GM12878 (cell line): ENCODE measurements at regions of chr20 and their contacts with region 1.

Region 1: DNA sequence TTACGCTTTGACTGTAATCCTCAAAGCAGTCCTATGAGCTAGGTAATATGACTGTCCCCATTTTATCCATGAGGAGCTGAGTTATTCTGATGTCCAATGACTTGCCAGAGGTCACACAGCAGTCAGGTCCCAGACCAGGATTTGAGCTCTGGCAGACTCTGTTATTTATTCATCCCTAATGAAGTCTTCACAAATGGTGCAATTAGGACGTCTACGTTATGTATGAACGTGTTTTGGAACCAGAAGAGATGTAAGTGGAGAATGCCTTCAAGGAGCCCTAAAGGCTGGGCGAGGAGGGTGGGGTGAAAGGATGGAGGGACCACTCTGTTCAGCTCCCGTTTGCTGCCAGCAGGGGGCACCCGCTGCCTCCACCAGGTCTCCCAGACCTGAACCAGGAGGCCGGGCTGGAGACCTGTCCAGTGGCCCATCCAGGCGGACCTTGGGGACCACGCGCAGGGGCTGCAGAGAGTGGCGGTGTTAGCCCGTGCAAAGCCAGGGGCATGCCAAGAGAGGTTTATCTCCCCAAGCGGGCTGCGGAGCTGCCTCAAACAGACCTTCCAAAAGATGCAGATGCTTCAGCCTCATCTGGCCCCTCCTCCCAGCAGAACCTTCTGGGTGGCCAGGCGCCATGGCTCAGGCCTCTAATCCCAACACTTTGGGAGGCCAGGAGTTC is 15.2 kb upstream of the ZNF335 start:
- DNase-seq: no peak
- ATAC-seq: peak; percentile 100
- H3K4me3 ChIP-seq: no peak overlapping the region
- H3K27ac ChIP-seq: no peak overlapping the region
- H3K4me1 ChIP-seq: peaks cover 6% of the 10 kb centered on the region
- H3K27me3 ChIP-seq: no peaks in the 10 kb centered on the region; a peak in 1 of 4 replicates
- CTCF ChIP-seq: peak; percentile 92 to 96 (median 93)
- EP300 ChIP-seq: no peak
- POLR2A ChIP-seq: no peak
- RAD21 ChIP-seq: peak; percentile 83

Region 2: GRCh38 chr20:45998761-45999160 is 11.5 kb after region 1 on chr20:
- CTCF ChIA-PET with region 1: interaction called, 26 read pairs
- POLR2A ChIA-PET with region 1: no interaction called
- RAD21 ChIA-PET with region 1: interaction called, 4 read pairs
- SMC1A ChIA-PET with region 1: interaction called, 14 read pairs
- in situ Hi-C with region 1: no loop called
- intact Hi-C with region 1: no loop called
- DNase-seq: no peak
- ATAC-seq: peak; percentile 82
- H3K4me3 ChIP-seq: no peak overlapping the region
- H3K27ac ChIP-seq: no peak overlapping the region
- H3K4me1 ChIP-seq: peaks cover 10% of the 10 kb centered on the region
- H3K27me3 ChIP-seq: no peaks in the 10 kb centered on the region; a peak in 1 of 4 replicates
- CTCF ChIP-seq: no peak
- EP300 ChIP-seq: no peak
- POLR2A ChIP-seq: no peak
- RAD21 ChIP-seq: no peak

Region 3: DNA sequence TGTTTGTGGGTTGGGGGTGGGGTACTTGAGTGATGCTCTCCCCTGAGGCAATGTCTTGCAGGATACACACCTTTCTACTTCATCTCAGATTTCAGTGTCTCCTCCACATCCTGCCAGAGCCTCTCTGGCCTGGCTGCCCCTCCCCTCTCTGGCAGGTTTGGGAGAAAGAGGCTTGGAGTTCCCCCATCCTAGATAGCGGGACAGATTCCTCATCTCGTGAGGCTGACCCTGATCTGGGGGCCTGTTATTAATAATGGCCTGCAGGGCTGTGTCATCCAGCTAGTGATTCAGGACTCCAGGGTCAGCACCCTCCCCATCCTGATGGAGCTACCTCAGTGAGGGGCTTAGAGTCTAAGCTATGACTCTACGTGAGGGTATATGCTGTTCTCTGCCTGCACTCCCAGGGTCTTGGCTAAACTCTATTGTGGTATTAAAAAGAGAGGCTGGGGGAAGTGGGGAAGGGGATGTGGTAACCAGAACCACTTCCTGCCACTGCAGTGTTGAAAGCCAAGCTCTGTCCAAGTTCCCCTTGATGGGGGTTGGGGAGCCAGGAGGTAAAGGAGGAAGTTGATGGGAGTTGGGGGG is 17.7 kb after region 1 on chr20:
- CTCF ChIA-PET with region 1: interaction called, 190 read pairs
- POLR2A ChIA-PET with region 1: interaction called, 4 read pairs
- RAD21 ChIA-PET with region 1: interaction called, 66 read pairs
- SMC1A ChIA-PET with region 1: interaction called, 14 read pairs
- in situ Hi-C with region 1: no loop called
- intact Hi-C with region 1: no loop called
- DNase-seq: no peak
- ATAC-seq: peak; percentile 40
- H3K4me3 ChIP-seq: no peak overlapping the region
- H3K27ac ChIP-seq: 0 out of 2 replicates have a peak overlapping the region, but pooled peaks have one; percentile 25
- H3K4me1 ChIP-seq: peaks cover 40% of the 10 kb centered on the region
- H3K27me3 ChIP-seq: no peaks in the 10 kb centered on the region
- CTCF ChIP-seq: no peak
- EP300 ChIP-seq: 0 out of 4 replicates have a peak, but pooled peaks of 1 of the 2 experiments have one; percentile 53
- POLR2A ChIP-seq: no peak
- RAD21 ChIP-seq: no peak